ENCODE measurements at regions of chr6 and their contacts with region 1.

Region 1: DNA sequence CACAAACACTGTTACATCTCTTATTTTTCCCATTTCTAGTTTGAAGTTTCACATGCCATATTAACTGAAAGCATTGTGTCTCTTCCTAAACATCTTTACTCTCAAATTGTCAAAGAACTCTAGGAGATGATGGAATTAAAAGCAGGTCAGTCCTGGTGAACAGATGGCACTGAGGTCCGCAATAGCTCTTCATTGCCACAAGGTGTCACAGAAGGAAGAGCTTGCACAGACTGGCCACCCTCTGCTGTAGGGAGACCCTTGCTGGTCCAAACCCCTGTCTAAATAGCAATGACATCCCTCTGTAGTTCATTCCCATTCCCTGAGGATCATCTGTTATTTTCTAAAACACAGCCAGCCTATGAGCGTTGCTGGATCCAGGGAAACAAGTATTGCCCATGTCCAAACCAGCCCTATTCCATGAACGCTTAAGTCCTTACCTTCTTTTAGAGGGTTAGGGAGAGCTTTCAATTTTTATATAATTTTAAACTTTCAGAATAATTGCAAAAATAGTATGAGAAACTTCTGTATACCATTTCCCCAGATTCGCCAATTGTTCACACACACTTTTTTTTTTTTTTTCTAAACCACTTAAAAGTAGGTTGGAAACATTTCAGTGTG is 10.1 kb upstream of the HDAC2 start:
- DNase-seq: peak; percentile 67
- H3K4me3 ChIP-seq: no peak overlapping the region
- H3K27ac ChIP-seq: no peak overlapping the region
- H3K4me1 ChIP-seq: no peaks in the 10 kb centered on the region
- H3K27me3 ChIP-seq: no peaks in the 10 kb centered on the region
- CTCF ChIP-seq: peak; percentile 62
- EP300 ChIP-seq: no peak
- RAD21 ChIP-seq: peak; percentile 72

Region 2: GRCh38 chr6:113994918-113995342 is 13.9 kb after region 1 on chr6:
- CTCF ChIA-PET with region 1: interaction called, 16 read pairs
- POLR2A ChIA-PET with region 1: no interaction called
- DNase-seq: peak; percentile 44
- H3K4me3 ChIP-seq: peak overlapping the region in 1 of 2 experiments; percentile 46; a peak in 1 of 4 replicates
- H3K27ac ChIP-seq: peak overlapping the region; percentile 40 to 78; a peak in 3 of 4 replicates
- H3K4me1 ChIP-seq: peaks cover 9 to 24% of the 10 kb centered on the region in 2 experiments
- H3K27me3 ChIP-seq: no peaks in the 10 kb centered on the region
- CTCF ChIP-seq: peak; percentile 92
- EP300 ChIP-seq: no peak
- RAD21 ChIP-seq: peak; percentile 87